ENCODE measurements at regions of chr1 and their contacts with region 1.

Region 1: GRCh38 chr1:112337028-112337531 is 58.9 kb upstream of the CTTNBP2NL start:
- DNase-seq: no peak
- H3K4me3 ChIP-seq: no peak overlapping the region
- CTCF ChIP-seq: peak; percentile 57

Region 2: DNA sequence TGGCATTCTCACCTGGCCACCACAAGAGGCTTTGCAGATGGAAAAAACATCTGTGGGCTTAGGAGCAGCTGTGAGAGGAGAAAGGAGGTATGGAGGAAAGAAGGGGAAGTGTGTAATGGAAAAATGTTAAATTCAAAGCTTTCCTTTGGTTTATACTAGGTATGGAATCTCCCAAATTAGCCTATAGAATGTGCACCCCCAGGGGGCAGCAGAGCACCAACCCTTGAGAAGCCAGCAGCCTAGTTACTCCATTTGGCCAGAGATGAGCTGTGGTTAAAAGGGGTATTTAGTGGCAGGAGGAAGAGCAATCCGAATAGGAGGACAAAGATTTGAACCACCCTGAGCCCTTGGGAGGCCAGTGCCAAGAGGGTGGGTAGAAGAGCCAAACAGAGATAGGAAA is 38.5 kb before region 1 on chr1:
- CTCF ChIA-PET with region 1: interaction called, 15 read pairs
- POLR2A ChIA-PET with region 1: no interaction called
- DNase-seq: peak; percentile 4
- H3K4me3 ChIP-seq: no peak overlapping the region
- CTCF ChIP-seq: peak; percentile 59

Region 3: GRCh38 chr1:112358798-112359408 is 21.8 kb after region 1 on chr1:
- CTCF ChIA-PET with region 1: interaction called, 15 read pairs
- POLR2A ChIA-PET with region 1: no interaction called
- DNase-seq: no peak
- H3K4me3 ChIP-seq: no peak overlapping the region
- CTCF ChIP-seq: peak; percentile 91

Measured in AG04449 (cell line).